ENCODE measurements at regions of chr3 and their contacts with region 1.

Region 1: GRCh38 chr3:65936908-65937638 is 101.6 kb downstream of the MAGI1 start:
- DNase-seq: no peak

Region 2: GRCh38 chr3:65914740-65915367 is 22.2 kb before region 1 on chr3:
- intact Hi-C with region 1: loop called (anchors 1 kb)
- DNase-seq: no peak